Right lobe of liver (tissue), 6 donors: ENCODE measurements at regions of chr4 and their contacts with region 1.

Region 1: GRCh38 chr4:139030614-139031235 is 15.1 kb downstream of the NOCT start:
- DNase-seq: peak in 2 of 3 donors; percentile 38 to 75
- ATAC-seq: peak; percentile 63 to 67 (median 66)
- H3K4me3 ChIP-seq: no peak overlapping the region
- H3K27ac ChIP-seq: peak overlapping the region in 2 of 3 donors; percentile 90 to 97
- H3K4me1 ChIP-seq: peaks cover 0 to 27% (median 6%) of the 10 kb centered on the region in 4 donors
- H3K27me3 ChIP-seq: no peaks in the 10 kb centered on the region
- CTCF ChIP-seq: peak; percentile 75 to 87 (median 77)
- POLR2A ChIP-seq: no peak

Region 2: GRCh38 chr4:139083956-139084803 is 53.5 kb after region 1 on chr4:
- intact Hi-C with region 1: loop called in 1 of 2 experiments (anchors 10 kb)
- DNase-seq: peak; percentile 89 to 94 (median 93)
- ATAC-seq: peak; percentile 62 to 81 (median 77)
- H3K4me3 ChIP-seq: peak overlapping the region; percentile 66 to 71 (median 69)
- H3K27ac ChIP-seq: peak overlapping the region; percentile 91 to 96 (median 92)
- H3K4me1 ChIP-seq: peaks cover 0 to 19% (median 8%) of the 10 kb centered on the region in 4 donors
- H3K27me3 ChIP-seq: no peaks in the 10 kb centered on the region
- CTCF ChIP-seq: peak; percentile 28 to 39 (median 35)
- POLR2A ChIP-seq: peak; percentile 72

Region 3: GRCh38 chr4:139229534-139230039 is 198.9 kb after region 1 on chr4:
- intact Hi-C with region 1: no loop called
- DNase-seq: no peak
- ATAC-seq: peak; percentile 87 to 95 (median 88)
- H3K4me3 ChIP-seq: no peak overlapping the region
- H3K27ac ChIP-seq: no peak overlapping the region
- H3K4me1 ChIP-seq: no peaks in the 10 kb centered on the region
- H3K27me3 ChIP-seq: no peaks in the 10 kb centered on the region
- CTCF ChIP-seq: peak; percentile 74 to 79 (median 75)
- POLR2A ChIP-seq: no peak